Right cardiac atrium (tissue), 5 donors: ENCODE measurements at regions of chr20 and their contacts with region 1.

Region 1: DNA sequence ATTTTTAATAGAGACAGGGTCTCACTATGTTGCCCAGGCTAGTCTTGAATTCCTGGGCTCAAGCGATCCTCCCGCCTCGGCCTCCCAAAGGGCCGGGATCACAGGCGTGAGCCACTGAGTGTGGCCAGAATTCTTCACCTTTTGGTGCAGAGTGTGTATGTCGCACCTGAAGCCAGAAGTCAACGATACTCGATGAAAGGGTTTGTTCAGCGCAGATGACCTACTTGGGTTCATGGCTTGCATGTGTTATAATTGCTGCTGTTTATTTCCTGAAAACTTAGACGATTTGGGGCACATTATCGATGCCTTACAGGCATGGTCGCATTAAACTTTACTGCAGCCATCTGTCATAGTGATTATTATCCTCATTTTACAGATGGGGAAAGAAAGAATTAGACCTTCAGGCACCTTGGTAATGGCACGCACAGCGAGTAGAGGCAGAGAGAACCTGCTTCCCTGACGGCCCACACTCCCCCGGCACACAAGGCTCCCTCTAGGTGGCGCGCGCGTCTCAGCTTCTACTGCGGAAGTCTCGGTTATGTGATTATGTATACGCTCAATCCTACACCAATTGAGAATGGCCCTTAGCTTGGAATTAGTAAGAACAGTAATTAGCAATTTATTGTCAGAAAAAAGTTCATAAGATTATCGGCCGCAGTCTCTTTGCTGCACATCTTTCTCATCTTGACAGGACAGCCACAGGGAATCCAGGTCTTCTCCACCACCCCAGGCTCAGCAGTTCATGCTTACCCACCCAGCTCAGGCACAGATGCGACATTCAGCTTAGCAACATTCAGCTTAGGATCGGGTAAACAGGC is 212.8 kb upstream of the PROKR2 start:
- DNase-seq: peak; percentile 82 to 93 (median 93)
- ATAC-seq: peak; percentile 84 to 88
- H3K4me3 ChIP-seq: no peak overlapping the region
- H3K27ac ChIP-seq: no peak overlapping the region
- H3K4me1 ChIP-seq: no peaks in the 10 kb centered on the region
- H3K27me3 ChIP-seq: no peaks in the 10 kb centered on the region

Region 2: DNA sequence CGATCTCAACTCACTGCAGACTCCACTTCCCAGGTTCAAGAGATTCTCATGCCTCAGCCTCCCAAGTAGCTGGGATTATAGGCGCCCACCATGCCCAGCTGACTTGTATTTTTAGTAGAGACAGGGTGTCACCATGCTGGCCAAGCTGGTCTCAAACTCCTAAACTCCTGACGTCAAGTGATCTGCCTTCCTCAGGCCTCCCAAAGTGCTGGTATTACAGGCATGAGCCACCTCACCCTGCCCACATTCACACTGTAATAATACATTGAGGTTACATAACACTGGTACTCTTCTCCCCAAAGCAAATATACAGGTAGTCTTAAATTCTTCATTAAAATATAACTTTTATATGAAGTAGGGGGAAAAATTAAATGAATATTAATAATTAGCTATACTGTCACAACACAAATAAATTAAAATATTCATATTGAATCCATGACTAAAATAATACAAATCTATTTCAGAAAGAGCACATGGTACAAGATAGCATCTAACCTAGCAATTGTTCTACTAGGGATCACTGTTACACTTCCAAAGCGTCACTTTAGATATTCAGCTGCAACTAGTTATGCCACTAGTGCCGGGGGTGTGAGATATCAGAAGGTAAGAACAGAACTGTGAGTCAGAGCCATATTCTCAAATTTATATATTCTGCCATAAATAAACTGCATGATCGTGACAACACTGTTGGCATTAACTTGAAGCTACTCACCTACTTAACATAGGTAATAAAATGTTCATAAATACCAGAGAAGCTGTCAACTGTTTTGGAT is 51.6 kb after region 1 on chr20:
- intact Hi-C with region 1: no loop called
- DNase-seq: no peak
- ATAC-seq: no peak
- H3K4me3 ChIP-seq: no peak overlapping the region
- H3K27ac ChIP-seq: no peak overlapping the region
- H3K4me1 ChIP-seq: no peaks in the 10 kb centered on the region
- H3K27me3 ChIP-seq: no peaks in the 10 kb centered on the region

Region 3: GRCh38 chr20:5766085-5766764 is 236.7 kb after region 1 on chr20:
- intact Hi-C with region 1: no loop called
- DNase-seq: peak in 2 of 3 donors; percentile 28 to 60
- ATAC-seq: peak; percentile 93 to 94
- H3K4me3 ChIP-seq: no peak overlapping the region
- H3K27ac ChIP-seq: peak overlapping the region; percentile 92
- H3K4me1 ChIP-seq: peaks cover 3% of the 10 kb centered on the region
- H3K27me3 ChIP-seq: no peaks in the 10 kb centered on the region

Region 4: GRCh38 chr20:5788385-5788895 is 258.9 kb after region 1 on chr20:
- intact Hi-C with region 1: loop called in 1 of 4 experiments (anchors 2 kb)
- DNase-seq: peak; percentile 70 to 89 (median 73)
- ATAC-seq: peak; percentile 91 to 93
- H3K4me3 ChIP-seq: no peak overlapping the region
- H3K27ac ChIP-seq: no peak overlapping the region
- H3K4me1 ChIP-seq: peaks cover 4% of the 10 kb centered on the region
- H3K27me3 ChIP-seq: no peaks in the 10 kb centered on the region

Region 5: GRCh38 chr20:5945963-5946362 is 416.4 kb after region 1 on chr20:
- intact Hi-C with region 1: loop called in 2 of 4 experiments (anchors 10 kb)
- DNase-seq: no peak
- ATAC-seq: no peak
- H3K4me3 ChIP-seq: no peak overlapping the region
- H3K27ac ChIP-seq: no peak overlapping the region
- H3K4me1 ChIP-seq: no peaks in the 10 kb centered on the region
- H3K27me3 ChIP-seq: no peaks in the 10 kb centered on the region

Region 6: DNA sequence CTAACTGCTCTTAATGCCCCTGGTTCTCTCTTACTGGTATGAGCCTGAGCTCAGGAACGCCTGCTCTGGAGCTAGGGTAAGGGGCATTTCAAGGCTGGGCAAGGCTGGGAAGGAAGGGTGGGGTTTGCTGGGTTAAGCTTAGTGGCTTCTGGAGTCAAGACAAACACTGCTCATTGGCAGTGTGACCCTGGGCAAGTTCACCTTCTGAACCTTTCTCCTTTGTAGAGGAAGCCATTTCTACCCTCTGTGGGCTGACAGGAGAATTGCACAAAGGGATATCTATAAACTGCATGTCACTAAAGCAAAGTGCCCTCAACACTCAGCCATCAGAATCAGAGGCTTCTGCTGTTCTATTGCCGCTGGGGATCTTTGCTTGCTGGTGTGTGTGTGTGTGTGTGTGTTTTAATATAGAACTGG is 544.6 kb after region 1 on chr20:
- intact Hi-C with region 1: loop called (anchors 2 to 10 kb)
- DNase-seq: no peak
- ATAC-seq: peak; percentile 69 to 77
- H3K4me3 ChIP-seq: no peak overlapping the region
- H3K27ac ChIP-seq: peak overlapping the region; percentile 91
- H3K4me1 ChIP-seq: no peaks in the 10 kb centered on the region
- H3K27me3 ChIP-seq: no peaks in the 10 kb centered on the region